Activated CD8-positive, alpha-beta memory T cell treated with anti-CD3 and anti-CD28 coated beads, Interleukin-2, amount 10 ng/mL, durations not matched to agents 7 days and 5 days (primary cell): ENCODE measurements at regions of chr9 and their contacts with region 1.

Region 1: GRCh38 chr9:128026773-128027541 is 40.2 kb downstream of the NAIF1 start:
- DNase-seq: peak; percentile 70
- ATAC-seq: peak; percentile 20
- H3K4me3 Mint-ChIP-seq: peak overlapping the region; percentile 20
- H3K27ac Mint-ChIP-seq: peak overlapping the region; percentile 95
- H3K4me1 Mint-ChIP-seq: peaks cover 91% of the 10 kb centered on the region
- H3K27me3 Mint-ChIP-seq: peaks cover 3% of the 10 kb centered on the region

Region 2: DNA sequence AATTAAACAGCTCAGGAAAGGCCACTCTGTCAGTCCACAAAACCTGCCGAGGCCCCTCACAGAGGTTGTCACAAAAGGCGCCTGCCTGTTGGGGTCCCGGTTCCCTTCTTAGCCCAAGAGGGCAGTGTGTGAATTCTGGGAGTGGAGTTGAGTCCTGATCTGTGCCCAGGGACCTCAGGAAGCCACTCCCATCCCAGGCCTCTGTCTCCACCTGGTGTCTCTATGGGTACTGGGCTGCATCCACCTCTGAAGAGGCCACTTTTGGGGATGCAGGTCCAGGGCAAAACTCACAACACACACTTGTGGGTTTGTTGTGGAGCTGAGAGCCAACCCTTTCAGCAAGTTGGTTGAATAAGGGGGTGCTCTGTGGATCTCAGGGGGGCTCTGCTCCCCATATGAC is 489.2 kb before region 1 on chr9:
- CTCF ChIA-PET with region 1: no interaction called
- DNase-seq: no peak
- ATAC-seq: no peak
- H3K4me3 Mint-ChIP-seq: no peak overlapping the region
- H3K27ac Mint-ChIP-seq: no peak overlapping the region
- H3K4me1 Mint-ChIP-seq: peaks cover 2% of the 10 kb centered on the region
- H3K27me3 Mint-ChIP-seq: no peaks in the 10 kb centered on the region

Region 3: GRCh38 chr9:127970401-127971313 is 56.3 kb before region 1 on chr9:
- CTCF ChIA-PET with region 1: interaction called, 12 read pairs
- DNase-seq: peak; percentile 92
- ATAC-seq: peak; percentile 85
- H3K4me3 Mint-ChIP-seq: peak overlapping the region; percentile 68
- H3K27ac Mint-ChIP-seq: peak overlapping the region; percentile 90
- H3K4me1 Mint-ChIP-seq: peaks cover 89% of the 10 kb centered on the region
- H3K27me3 Mint-ChIP-seq: no peaks in the 10 kb centered on the region

Region 4: GRCh38 chr9:128007566-128008138 is 19.3 kb before region 1 on chr9:
- CTCF ChIA-PET with region 1: interaction called, 18 read pairs
- DNase-seq: peak; percentile 88
- ATAC-seq: peak; percentile 92
- H3K4me3 Mint-ChIP-seq: peak overlapping the region; percentile 55
- H3K27ac Mint-ChIP-seq: peak overlapping the region; percentile 93
- H3K4me1 Mint-ChIP-seq: peaks cover 29% of the 10 kb centered on the region
- H3K27me3 Mint-ChIP-seq: no peaks in the 10 kb centered on the region

Region 5: DNA sequence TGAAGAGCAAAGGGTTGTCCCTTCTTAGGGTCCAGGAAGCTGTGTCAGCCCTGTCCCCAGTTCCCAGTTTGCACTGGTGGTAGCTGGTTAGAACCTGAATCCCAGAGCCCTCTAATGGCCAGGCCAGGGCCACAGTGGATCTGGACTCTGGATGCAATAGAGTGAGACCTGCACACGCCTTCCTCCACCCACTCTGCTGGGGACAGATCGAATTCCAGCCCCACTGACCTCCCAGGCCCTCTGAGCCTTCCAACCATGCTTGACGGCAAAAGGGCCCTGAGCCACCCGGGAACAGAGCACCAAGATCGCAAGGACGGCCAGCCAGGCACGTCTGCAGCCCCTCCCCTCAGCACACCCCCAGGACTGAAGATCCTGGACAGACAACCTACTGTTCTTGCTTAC is 16.5 kb after region 1 on chr9:
- CTCF ChIA-PET with region 1: no interaction called
- DNase-seq: no peak
- ATAC-seq: no peak
- H3K4me3 Mint-ChIP-seq: no peak overlapping the region
- H3K27ac Mint-ChIP-seq: no peak overlapping the region
- H3K4me1 Mint-ChIP-seq: peaks cover 5% of the 10 kb centered on the region
- H3K27me3 Mint-ChIP-seq: peaks cover 2% of the 10 kb centered on the region